B cell (primary cell): ENCODE measurements at regions of chr10 and their contacts with region 1.

Region 1: DNA sequence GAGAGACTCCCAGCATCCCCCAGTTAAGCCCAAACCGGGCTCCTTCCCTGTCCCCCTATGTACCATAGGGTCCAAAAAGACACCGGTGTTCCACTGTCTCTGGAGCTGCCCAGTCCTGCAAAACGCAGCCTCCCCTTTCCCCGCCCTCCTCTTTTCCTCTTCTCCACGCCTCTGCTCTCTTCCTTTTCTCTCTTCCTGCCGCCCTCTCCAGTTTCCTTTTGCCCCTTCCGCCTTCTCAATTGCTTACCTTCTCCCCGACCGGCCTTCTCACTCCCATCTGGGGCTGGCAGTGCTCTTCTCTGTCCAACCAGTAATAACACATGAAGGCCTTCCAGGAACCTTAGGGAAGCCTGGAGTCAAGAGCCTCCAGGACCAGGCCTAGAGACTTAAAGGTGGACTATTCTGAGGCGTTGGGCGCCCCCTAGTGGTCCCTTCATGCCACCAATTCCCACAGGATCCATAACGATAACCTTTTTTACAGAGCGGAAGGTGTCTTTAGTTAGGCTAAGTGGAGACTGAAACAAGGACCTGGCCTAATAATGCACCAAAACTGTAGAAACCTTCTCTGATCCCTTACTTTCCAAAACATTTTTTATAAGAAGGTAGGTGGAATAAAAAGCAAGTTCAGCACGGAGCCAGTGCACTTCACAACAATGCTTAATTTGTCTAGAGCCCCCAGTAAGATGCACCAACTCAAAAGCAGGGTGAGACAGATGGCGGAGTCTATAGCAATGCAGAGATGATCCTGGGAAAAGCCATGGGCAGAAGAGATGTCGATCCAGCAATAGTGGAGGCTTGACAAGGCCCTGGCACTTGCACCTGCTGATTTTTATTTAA is 27.2 kb upstream of the MSRB2 start:
- DNase-seq: peak; percentile 70
- ATAC-seq: peak; percentile 33
- H3K4me3 ChIP-seq: no peak overlapping the region
- H3K4me3 Mint-ChIP-seq: no peak overlapping the region
- H3K27ac ChIP-seq: no peak overlapping the region
- H3K27ac Mint-ChIP-seq: no peak overlapping the region
- H3K4me1 ChIP-seq: no peaks in the 10 kb centered on the region
- H3K4me1 Mint-ChIP-seq: no peaks in the 10 kb centered on the region
- H3K27me3 ChIP-seq: peaks cover 0 to 4% (median 0%) of the 10 kb centered on the region in 4 experiments
- H3K27me3 Mint-ChIP-seq: peaks cover 20% of the 10 kb centered on the region
- CTCF ChIP-seq: peak; percentile 87

Region 2: GRCh38 chr10:21572578-21572977 is 1495.6 kb before region 1 on chr10:
- CTCF ChIA-PET with region 1: no interaction called
- POLR2A ChIA-PET with region 1: no interaction called
- intact Hi-C with region 1: no loop called
- DNase-seq: no peak
- ATAC-seq: no peak
- H3K4me3 ChIP-seq: no peak overlapping the region
- H3K4me3 Mint-ChIP-seq: no peak overlapping the region
- H3K27ac ChIP-seq: no peak overlapping the region
- H3K27ac Mint-ChIP-seq: no peak overlapping the region
- H3K4me1 ChIP-seq: peaks cover 3 to 11% of the 10 kb centered on the region in 2 donors
- H3K4me1 Mint-ChIP-seq: peaks cover 35% of the 10 kb centered on the region
- H3K27me3 ChIP-seq: no peaks in the 10 kb centered on the region
- H3K27me3 Mint-ChIP-seq: no peaks in the 10 kb centered on the region
- CTCF ChIP-seq: no peak

Region 3: GRCh38 chr10:22550732-22551131 is 517.4 kb before region 1 on chr10:
- CTCF ChIA-PET with region 1: no interaction called
- POLR2A ChIA-PET with region 1: no interaction called
- intact Hi-C with region 1: loop called (anchors 1 kb)
- DNase-seq: peak; percentile 72
- ATAC-seq: peak; percentile 49
- H3K4me3 ChIP-seq: no peak overlapping the region
- H3K4me3 Mint-ChIP-seq: no peak overlapping the region
- H3K27ac ChIP-seq: no peak overlapping the region
- H3K27ac Mint-ChIP-seq: no peak overlapping the region
- H3K4me1 ChIP-seq: no peaks in the 10 kb centered on the region
- H3K4me1 Mint-ChIP-seq: peaks cover 5% of the 10 kb centered on the region
- H3K27me3 ChIP-seq: no peaks in the 10 kb centered on the region
- H3K27me3 Mint-ChIP-seq: no peaks in the 10 kb centered on the region
- CTCF ChIP-seq: peak; percentile 84